ENCODE measurements at regions of chr5 and their contacts with region 1.

Region 1: GRCh38 chr5:72307968-72308852 is 11.8 kb downstream of the MRPS27 start:
- DNase-seq: peak; percentile 96 to 98
- ATAC-seq: peak; percentile 95 to 99 (median 96)
- H3K4me3 ChIP-seq: peak overlapping the region; percentile 99
- H3K4me3 Mint-ChIP-seq: peak overlapping the region; percentile 96
- H3K27ac ChIP-seq: peak overlapping the region; percentile 99
- H3K27ac Mint-ChIP-seq: peak overlapping the region; percentile 93 to 96
- H3K4me1 ChIP-seq: peaks cover 7% of the 10 kb centered on the region
- H3K4me1 Mint-ChIP-seq: peaks cover 33% of the 10 kb centered on the region in 2 donors
- H3K27me3 ChIP-seq: no peaks in the 10 kb centered on the region
- H3K27me3 Mint-ChIP-seq: no peaks in the 10 kb centered on the region
- CTCF ChIP-seq: peak; percentile 80

Region 2: DNA sequence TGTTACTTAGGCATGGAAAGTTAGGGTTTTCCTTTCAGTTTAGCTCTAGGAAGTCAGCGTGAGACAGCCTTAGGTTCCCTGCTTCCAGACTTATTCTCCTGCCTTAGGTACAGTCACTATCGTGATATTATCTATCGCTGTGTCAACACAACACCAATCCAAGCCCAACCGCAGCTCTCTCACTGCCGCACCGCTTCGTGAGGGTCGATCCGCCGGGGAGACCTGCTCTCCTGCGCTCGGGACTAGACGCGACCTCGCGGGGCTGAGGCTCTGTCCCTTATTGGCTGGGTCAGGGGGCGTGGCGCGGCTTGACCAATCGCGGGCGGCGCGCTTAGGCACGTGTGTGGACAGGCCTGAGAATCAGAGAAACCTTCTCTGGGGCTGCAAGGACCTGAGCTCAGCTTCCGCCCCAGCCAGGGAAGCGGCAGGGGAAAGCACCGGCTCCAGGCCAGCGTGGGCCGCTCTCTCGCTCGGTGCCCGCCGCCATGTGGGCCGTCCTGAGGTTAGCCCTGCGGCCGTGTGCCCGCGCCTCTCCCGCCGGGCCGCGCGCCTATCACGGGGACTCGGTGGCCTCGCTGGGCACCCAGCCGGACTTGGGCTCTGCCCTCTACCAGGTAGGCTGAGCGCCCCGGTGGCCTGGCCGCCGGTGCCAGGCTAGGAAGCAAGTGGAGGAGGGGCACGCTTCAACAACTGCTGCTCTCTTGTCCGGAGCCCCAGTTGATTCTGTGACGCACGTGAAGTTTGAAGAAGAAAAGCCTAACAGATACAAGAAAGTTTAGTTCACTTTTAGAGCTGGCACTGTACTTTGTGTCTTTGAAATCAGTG is 721.1 kb before region 1 on chr5 and contains the start of gene MCCC2:
- intact Hi-C with region 1: loop called (anchors 5 kb)
- DNase-seq: peak; percentile 97 to 98
- ATAC-seq: peak; percentile 95 to 99 (median 95)
- H3K4me3 ChIP-seq: peak within 1 kb of the TSS; percentile 71
- H3K4me3 Mint-ChIP-seq: peak within 1 kb of the TSS; percentile 94
- H3K27ac ChIP-seq: peak within 1 kb of the TSS; percentile 90
- H3K27ac Mint-ChIP-seq: peak within 1 kb of the TSS; percentile 94 to 97
- H3K4me1 ChIP-seq: peaks cover 17% of the 10 kb centered on the region
- H3K4me1 Mint-ChIP-seq: peaks cover 33 to 46% of the 10 kb centered on the region in 2 donors
- H3K27me3 ChIP-seq: no peaks in the 10 kb centered on the region
- H3K27me3 Mint-ChIP-seq: no peaks in the 10 kb centered on the region
- CTCF ChIP-seq: no peak
- total RNA-seq, gene MCCC2: 23.3 to 35.2 (median 32.5) TPM

Region 3: DNA sequence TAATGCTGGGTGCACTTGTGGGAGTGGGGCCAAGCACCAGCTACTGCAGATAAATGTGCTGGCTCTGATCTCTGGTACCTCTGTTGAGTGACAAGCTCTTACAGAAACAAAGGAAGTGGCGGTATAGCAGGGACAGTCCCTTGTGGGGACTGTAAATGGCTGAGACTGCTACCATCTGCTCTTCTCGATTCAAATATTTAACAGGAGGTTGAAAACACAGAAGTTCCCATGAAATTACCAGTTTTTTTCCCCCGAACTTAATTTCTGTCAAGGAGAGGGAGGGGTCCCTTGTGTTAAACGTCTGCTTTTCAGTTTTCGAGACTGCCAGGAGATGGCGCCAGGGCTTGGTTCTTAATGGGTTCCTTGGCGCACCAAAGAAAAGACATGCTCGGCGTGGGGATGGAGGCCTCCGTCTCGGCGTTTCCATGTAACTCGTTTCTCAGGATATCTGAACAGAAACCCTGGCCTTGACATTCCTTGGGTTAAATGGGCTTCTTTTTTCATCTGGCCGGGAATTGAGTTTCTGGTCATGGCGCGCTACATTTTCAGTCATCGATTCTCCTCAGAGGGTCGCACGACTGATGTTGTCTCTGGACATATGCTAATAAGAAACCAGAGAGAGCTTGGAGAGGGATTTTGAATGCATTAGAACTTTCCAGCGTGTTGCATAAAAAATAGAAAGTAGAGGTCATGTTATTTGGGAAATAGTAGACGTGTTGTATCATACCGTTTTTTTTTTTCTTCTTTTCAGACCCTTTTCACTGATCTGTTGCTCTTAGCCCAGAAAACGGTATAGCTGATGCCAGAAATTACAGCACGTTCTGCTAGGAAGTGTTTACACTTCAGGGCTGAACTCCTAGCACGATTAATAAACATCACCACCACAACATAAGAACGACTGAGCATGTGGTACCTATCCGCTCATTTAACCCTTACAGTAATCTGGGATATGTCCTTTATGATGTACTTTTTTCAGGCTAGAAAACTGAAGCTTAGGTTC is 525.1 kb before region 1 on chr5:
- intact Hi-C with region 1: loop called (anchors 5 kb)
- DNase-seq: peak in 1 of 2 donors; percentile 43
- ATAC-seq: peak; percentile 40 to 59 (median 51)
- H3K4me3 ChIP-seq: no peak overlapping the region
- H3K4me3 Mint-ChIP-seq: no peak overlapping the region
- H3K27ac ChIP-seq: no peak overlapping the region
- H3K27ac Mint-ChIP-seq: no peak overlapping the region
- H3K4me1 ChIP-seq: peaks cover 3% of the 10 kb centered on the region
- H3K4me1 Mint-ChIP-seq: peaks cover 0 to 4% of the 10 kb centered on the region in 2 donors
- H3K27me3 ChIP-seq: no peaks in the 10 kb centered on the region
- H3K27me3 Mint-ChIP-seq: peaks cover 14 to 16% of the 10 kb centered on the region in 2 donors
- CTCF ChIP-seq: peak; percentile 37

Region 4: GRCh38 chr5:72137826-72138409 is 170.3 kb before region 1 on chr5:
- intact Hi-C with region 1: loop called (anchors 1 kb)
- DNase-seq: peak in 1 of 2 donors; percentile 45
- ATAC-seq: peak in 2 of 3 donors; percentile 65 to 67
- H3K4me3 ChIP-seq: no peak overlapping the region
- H3K4me3 Mint-ChIP-seq: no peak overlapping the region
- H3K27ac ChIP-seq: no peak overlapping the region
- H3K27ac Mint-ChIP-seq: no peak overlapping the region
- H3K4me1 ChIP-seq: no peaks in the 10 kb centered on the region
- H3K4me1 Mint-ChIP-seq: peaks cover 9 to 15% of the 10 kb centered on the region in 2 donors
- H3K27me3 ChIP-seq: peaks cover 13% of the 10 kb centered on the region
- H3K27me3 Mint-ChIP-seq: peaks cover 40 to 53% of the 10 kb centered on the region in 2 donors
- CTCF ChIP-seq: peak; percentile 80

Region 5: GRCh38 chr5:72234265-72234700 is 73.9 kb before region 1 on chr5:
- intact Hi-C with region 1: loop called (anchors 1 kb)
- DNase-seq: peak; percentile 18 to 81
- ATAC-seq: peak; percentile 85 to 94 (median 94)
- H3K4me3 ChIP-seq: no peak overlapping the region
- H3K4me3 Mint-ChIP-seq: peak overlapping the region; percentile 78
- H3K27ac ChIP-seq: no peak overlapping the region
- H3K27ac Mint-ChIP-seq: peak overlapping the region; percentile 33 to 89
- H3K4me1 ChIP-seq: peaks cover 15% of the 10 kb centered on the region
- H3K4me1 Mint-ChIP-seq: peaks cover 52 to 53% of the 10 kb centered on the region in 2 donors
- H3K27me3 ChIP-seq: peaks cover 3% of the 10 kb centered on the region
- H3K27me3 Mint-ChIP-seq: peaks cover 14 to 16% of the 10 kb centered on the region in 2 donors
- CTCF ChIP-seq: no peak

Region 6: GRCh38 chr5:72319976-72320752 is 12.0 kb after region 1 on chr5 and contains the starts of genes MRPS27 and PTCD2:
- intact Hi-C with region 1: loop called (anchors 1 kb)
- DNase-seq: peak; percentile 87 to 99
- ATAC-seq: peak; percentile 98 to 100 (median 99)
- H3K4me3 ChIP-seq: peak within 1 kb of the TSS; percentile 78
- H3K4me3 Mint-ChIP-seq: peak within 1 kb of the TSS; percentile 89
- H3K27ac ChIP-seq: peak within 1 kb of the TSS; percentile 69
- H3K27ac Mint-ChIP-seq: peak within 1 kb of the TSS; percentile 84 to 90
- H3K4me1 ChIP-seq: peaks cover 12% of the 10 kb centered on the region
- H3K4me1 Mint-ChIP-seq: peaks cover 17 to 32% of the 10 kb centered on the region in 2 donors
- H3K27me3 ChIP-seq: no peaks in the 10 kb centered on the region
- H3K27me3 Mint-ChIP-seq: no peaks in the 10 kb centered on the region
- CTCF ChIP-seq: no peak
- total RNA-seq, gene MRPS27: 25.5 to 36.5 (median 36.3) TPM
- total RNA-seq, gene PTCD2: 4.9 to 5.9 (median 5.0) TPM

Region 7: GRCh38 chr5:72584466-72584865 is 276.3 kb after region 1 on chr5:
- intact Hi-C with region 1: no loop called
- DNase-seq: no peak
- ATAC-seq: peak in 2 of 3 donors; percentile 26 to 44
- H3K4me3 ChIP-seq: no peak overlapping the region
- H3K4me3 Mint-ChIP-seq: no peak overlapping the region
- H3K27ac ChIP-seq: no peak overlapping the region
- H3K27ac Mint-ChIP-seq: no peak overlapping the region
- H3K4me1 ChIP-seq: no peaks in the 10 kb centered on the region
- H3K4me1 Mint-ChIP-seq: peaks cover 0 to 7% of the 10 kb centered on the region in 2 donors
- H3K27me3 ChIP-seq: no peaks in the 10 kb centered on the region
- H3K27me3 Mint-ChIP-seq: peaks cover 0 to 3% of the 10 kb centered on the region in 2 donors
- CTCF ChIP-seq: no peak

Measured in natural killer cell (primary cell).